Left ventricle myocardium superior (tissue), 1 donor: ENCODE measurements at regions of chr9 and their contacts with region 1.

Region 1: DNA sequence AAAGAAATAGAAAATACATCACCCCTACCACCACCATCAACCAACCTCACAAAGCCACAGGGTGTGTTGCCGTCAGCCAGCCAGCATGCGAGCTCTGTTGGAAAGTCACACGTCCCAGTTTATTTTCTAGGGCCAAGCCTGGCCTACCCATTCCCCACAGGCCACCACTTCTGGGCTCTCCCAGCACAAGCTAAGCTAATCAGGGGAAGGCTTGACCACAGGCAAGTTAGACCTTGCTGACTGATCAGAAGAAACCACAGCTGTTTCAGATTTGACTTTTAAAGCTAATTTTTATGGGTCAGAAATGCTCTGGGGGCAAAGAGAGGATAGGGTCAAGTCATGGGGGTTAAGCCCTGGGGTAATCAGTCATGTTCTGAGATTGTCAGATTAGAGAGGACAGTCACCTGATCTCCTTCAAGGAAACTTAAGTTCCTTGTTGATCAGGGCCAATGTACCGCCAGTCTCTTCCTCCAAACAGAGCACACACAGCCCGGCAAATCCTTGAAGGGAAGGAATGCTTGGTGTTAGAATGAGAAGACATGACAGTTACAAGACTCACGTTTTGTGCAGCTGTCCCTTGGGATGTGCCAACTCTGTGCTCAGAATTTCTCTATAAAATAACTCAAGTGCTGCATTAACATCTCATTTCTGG is 7.6 kb downstream of the SHB start:
- DNase-seq: no peak
- ATAC-seq: no peak

Region 2: GRCh38 chr9:38024016-38024681 is 37.3 kb before region 1 on chr9:
- intact Hi-C with region 1: loop called (anchors 5 kb)
- DNase-seq: no peak
- ATAC-seq: peak; percentile 6

Region 3: DNA sequence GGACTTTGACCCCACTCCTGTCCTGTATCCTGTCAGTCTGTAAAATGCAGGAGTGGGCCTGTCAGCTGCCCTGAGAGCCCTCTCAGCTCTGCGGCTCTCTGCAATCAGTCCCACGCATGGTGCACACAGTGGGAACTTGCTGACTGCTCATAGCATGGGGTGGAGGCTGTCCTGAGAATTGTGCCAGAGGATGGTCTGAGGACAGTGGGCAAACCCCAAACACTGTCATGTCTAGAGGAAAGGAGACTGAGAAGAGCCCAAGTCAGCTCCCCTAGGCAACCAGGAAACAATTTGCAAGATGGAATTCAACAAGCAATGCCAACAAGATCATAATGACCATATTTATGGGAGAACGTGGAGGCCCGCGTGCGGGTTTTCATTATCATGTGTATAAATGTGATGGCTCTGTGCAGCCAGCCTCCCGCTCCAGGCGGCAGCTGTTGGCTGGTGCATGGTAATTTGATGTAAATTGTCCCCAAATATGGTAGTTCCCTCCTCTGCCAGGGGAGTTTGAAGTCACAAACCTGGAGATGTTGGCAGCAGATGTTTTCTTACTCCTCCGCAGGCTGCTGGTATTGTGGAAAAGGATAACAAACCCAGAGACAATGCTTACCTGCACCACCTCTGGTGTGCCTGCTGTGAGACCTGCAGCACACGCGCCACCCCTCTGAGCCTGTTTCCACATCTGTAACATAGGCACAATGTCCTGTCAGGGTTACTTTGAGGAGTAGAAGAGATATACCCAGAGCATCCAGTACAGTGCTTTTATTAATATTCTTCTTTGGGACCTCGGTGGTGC is 291.3 kb after region 1 on chr9:
- intact Hi-C with region 1: no loop called
- DNase-seq: no peak
- ATAC-seq: no peak